Pancreas (tissue), 10 donors: ENCODE measurements at regions of chr19 and their contacts with region 1.

Region 1: DNA sequence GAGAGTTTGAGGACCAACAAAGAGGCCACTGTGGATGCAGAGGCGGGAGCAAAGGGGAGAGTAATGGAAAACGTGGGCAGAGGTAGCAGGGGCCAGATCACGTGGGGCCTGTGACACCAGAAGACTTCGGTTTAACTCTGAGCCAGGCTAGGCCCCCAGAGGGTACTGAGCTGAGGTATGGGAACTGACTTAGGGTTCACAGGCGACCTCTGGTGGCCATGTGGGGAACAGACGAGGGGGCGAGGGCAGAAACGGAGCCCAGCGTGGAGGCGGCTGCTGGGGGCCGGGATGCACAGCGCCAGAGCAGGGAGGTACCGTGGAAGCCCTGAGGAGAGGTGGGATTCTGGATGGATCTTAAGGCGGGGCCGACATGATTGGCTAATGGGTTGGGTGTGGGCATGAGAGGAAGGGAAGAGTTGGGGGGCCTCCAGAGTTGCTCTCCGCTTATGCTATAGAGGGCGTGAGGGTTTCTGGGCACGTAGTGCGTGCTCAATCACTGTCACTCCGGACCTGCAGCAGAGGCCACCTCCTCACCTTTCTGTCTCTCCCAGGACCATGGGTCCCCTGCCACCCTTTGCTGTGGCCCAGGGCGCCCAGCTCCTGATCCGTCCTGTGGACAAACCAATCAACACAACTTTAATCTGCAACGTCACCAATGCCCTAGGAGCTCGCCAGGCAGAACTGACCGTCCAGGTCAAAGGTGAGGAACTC is 13.7 kb downstream of the PVR start:
- DNase-seq: peak; percentile 37 to 83 (median 69)
- ATAC-seq: peak; percentile 62 to 78 (median 75)
- H3K4me3 ChIP-seq: no peak overlapping the region
- H3K27ac ChIP-seq: no peak overlapping the region
- H3K4me1 ChIP-seq: no peaks in the 10 kb centered on the region
- H3K27me3 ChIP-seq: no peaks in the 10 kb centered on the region
- CTCF ChIP-seq: peak; percentile 80 to 91 (median 84)

Region 2: DNA sequence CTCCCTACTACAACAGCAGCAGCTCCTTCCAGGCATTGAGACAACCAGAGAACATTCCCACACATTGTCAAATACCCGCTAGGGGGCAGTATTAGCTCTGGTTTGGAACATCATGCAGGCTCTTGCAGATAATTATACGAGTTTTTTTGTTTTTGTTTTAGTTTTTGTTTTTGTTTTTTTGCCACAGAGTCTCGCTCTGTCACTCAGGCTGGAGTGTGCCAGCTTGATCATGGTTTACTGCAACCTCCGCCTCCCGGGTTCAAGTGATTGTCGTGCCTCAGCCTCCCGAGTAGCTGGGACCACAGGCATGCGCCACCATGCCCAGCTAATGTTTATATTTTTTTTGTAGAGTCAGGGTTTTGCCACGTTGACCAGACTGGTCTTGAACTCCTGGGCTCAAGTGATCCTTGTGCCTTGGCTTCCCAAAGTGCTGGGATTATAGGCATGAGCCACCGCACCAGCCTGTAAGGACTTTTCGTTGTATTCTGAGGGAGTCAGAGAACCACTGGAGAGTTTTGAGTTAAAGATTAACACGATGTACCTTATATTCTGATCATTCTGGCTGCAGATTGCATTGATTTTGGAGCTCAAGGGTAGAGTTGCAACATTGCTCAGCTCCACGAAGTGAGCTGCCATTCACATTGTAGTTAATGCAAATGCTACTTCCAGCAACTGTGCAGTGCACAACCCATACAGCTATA is 86.2 kb before region 1 on chr19:
- intact Hi-C with region 1: loop called in 2 of 3 experiments (anchors 5 kb)
- DNase-seq: peak in 3 of 6 donors; percentile 56 to 76 (median 69)
- ATAC-seq: peak; percentile 70 to 96 (median 92)
- H3K4me3 ChIP-seq: no peak overlapping the region
- H3K27ac ChIP-seq: no peak overlapping the region
- H3K4me1 ChIP-seq: no peaks in the 10 kb centered on the region
- H3K27me3 ChIP-seq: no peaks in the 10 kb centered on the region
- CTCF ChIP-seq: peak; percentile 58 to 83 (median 70)

Region 3: GRCh38 chr19:44576843-44577565 is 80.4 kb before region 1 on chr19:
- intact Hi-C with region 1: loop called (anchors 5 kb)
- DNase-seq: peak in 4 of 6 donors; percentile 27 to 53 (median 42)
- ATAC-seq: peak; percentile 78 to 99 (median 94)
- H3K4me3 ChIP-seq: no peak overlapping the region
- H3K27ac ChIP-seq: no peak overlapping the region
- H3K4me1 ChIP-seq: no peaks in the 10 kb centered on the region
- H3K27me3 ChIP-seq: no peaks in the 10 kb centered on the region
- CTCF ChIP-seq: peak; percentile 34 to 57 (median 56)

Region 4: DNA sequence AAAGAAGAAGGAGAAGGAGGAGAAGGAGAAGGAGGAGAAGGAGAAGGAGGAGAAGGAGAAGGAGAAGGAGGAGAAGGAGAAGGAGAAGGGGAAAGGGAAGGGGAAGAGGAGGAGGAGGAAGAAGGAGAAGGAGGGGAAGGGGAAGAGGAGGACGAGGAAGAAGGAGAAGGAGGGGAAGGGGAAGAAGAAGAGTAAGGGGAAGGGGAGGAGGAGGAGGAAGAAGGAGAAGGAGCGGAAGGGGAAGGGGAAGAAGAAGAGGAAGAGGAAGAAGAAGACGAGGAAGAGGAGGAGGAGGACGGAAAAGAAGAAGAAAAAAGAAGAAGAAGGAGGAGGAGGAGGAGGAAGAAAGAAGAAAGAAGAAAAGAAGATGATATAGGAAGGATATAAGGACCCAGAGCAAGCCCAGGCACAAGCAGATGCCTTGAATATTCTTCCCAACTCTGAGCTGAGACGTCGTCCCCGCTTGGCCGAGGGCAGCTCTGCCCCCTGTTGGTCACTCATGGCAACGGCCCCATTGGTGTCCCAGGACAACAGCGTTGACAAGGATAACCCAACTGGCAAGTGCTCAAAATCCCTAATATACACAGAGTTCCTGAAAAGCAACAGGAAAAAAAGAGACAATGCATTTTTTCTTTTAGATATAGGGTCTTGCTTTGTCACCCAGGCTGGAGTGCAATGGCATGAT is 74.6 kb before region 1 on chr19:
- intact Hi-C with region 1: loop called in 2 of 3 experiments (anchors 5 kb)
- DNase-seq: peak in 3 of 6 donors; percentile 36 to 69 (median 62)
- ATAC-seq: peak in 3 of 4 donors; percentile 49 to 84 (median 60)
- H3K4me3 ChIP-seq: no peak overlapping the region
- H3K27ac ChIP-seq: no peak overlapping the region
- H3K4me1 ChIP-seq: peaks cover 0 to 2% (median 0%) of the 10 kb centered on the region in 3 donors
- H3K27me3 ChIP-seq: no peaks in the 10 kb centered on the region
- CTCF ChIP-seq: peak; percentile 24 to 41 (median 37)

Region 5: DNA sequence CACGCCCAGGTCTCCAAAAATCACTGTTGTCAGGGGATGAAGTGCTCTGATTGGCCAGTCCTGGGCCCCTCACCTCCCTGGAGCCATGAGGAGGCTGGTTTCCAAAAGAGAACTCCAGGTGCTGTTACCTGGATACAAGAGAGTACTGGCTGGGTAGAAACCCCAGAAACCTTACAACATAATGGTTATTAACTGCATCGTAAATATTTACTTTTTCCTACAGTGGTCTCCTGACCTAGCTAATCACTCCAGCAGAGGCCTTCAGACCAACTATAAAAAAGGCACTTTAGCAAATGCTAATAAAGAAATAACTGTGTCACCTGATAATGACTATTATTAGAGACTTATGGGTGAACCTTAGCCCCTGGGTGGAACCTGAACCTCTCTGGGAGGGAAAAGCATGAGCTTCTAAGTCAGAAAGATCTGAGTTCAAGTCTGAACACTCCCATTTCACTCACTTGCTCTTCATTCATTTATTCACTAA is 45.5 kb before region 1 on chr19:
- intact Hi-C with region 1: no loop called
- DNase-seq: no peak
- ATAC-seq: peak; percentile 55 to 85 (median 78)
- H3K4me3 ChIP-seq: no peak overlapping the region
- H3K27ac ChIP-seq: no peak overlapping the region
- H3K4me1 ChIP-seq: peaks cover 0 to 3% (median 0%) of the 10 kb centered on the region in 3 donors
- H3K27me3 ChIP-seq: no peaks in the 10 kb centered on the region
- CTCF ChIP-seq: no peak

Region 6: DNA sequence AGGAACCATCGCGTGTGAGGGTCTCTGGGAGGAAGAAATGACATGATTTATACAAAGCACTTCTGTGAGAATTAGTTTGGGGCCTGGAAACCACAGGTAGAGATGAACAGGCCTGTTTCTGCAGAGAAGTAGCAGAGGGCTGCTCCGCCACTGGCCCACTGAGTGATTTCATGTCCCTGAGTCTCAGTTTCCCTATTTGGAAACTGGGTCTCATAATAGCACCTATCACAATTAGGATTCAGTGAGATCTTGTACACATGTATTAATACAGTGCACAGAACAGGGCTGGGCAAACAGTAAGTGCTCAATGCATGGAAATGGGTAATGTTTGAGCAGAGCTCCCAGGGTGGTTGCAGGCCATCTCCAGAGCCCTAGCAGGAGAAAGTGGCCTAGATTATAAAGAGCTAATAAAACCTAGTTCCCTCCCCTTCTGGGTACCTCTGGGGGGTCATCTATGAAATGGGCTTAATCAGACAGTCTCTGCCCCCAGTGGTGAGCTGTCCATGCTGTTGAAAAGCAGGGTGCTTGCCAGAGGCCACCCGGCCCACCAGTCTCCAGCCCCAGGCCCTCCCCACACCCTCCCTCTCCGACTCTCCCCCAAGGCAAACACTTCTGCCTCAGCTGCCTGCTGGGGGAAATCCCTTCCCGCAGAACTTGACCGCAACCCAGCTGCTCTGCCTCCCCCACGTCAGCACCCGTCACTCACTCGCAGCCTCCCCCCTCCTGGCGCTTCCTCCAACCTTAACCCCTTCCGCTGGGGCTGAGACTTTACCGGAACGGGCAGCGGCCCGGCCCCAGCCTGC is 95.7 kb after region 1 on chr19:
- intact Hi-C with region 1: no loop called
- DNase-seq: peak; percentile 88 to 97 (median 92)
- ATAC-seq: peak; percentile 57 to 82 (median 71)
- H3K4me3 ChIP-seq: peak overlapping the region in 2 of 4 donors; percentile 49 to 80
- H3K27ac ChIP-seq: peak overlapping the region; percentile 79 to 96 (median 83)
- H3K4me1 ChIP-seq: peaks cover 14 to 31% (median 21%) of the 10 kb centered on the region in 3 donors
- H3K27me3 ChIP-seq: no peaks in the 10 kb centered on the region
- CTCF ChIP-seq: no peak

Region 7: DNA sequence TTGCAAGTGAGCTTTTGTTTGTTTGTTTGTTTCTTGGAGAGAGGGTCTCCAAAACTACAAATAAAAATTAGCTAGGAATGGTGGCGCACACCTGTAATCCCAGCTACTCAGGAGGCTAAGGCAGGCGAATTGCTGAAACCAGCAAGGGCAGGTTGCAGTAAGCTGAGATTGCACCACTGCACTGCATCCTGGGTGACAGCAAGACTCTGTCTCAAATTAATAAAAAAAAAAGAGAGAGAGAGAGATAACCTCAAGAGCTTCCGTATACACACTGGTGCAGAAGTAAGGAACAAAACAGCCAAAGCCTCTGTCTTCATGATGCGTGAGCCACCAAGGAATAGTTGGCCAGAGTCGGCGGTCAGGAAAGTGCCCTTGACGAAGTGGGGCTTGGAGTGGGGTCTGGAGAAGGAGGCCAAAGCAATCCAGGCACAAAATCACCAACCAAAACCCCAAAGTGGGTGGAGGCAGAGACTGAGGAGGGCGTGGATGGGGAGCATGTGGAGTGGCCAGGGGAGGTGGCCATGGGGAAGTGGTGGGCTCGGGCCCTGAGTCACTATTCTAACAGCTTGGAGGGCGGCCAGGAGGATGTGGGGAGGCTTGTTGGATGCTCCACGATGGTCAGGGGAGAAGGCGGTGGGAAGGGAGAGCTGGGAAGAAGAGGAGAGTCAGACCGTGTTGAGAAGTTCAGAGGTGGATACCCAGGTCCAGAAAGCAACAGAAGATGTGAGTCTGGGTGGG is 212.5 kb after region 1 on chr19:
- intact Hi-C with region 1: no loop called
- DNase-seq: peak in 2 of 6 donors; percentile 27 to 59
- ATAC-seq: peak in 3 of 4 donors; percentile 20 to 57 (median 40)
- H3K4me3 ChIP-seq: no peak overlapping the region
- H3K27ac ChIP-seq: peak overlapping the region in 1 of 4 donors; percentile 48
- H3K4me1 ChIP-seq: peaks cover 0 to 3% (median 0%) of the 10 kb centered on the region in 3 donors
- H3K27me3 ChIP-seq: no peaks in the 10 kb centered on the region
- CTCF ChIP-seq: no peak